Heart left ventricle (tissue), 16 donors: ENCODE measurements at regions of chr10 and their contacts with region 1.

Region 1: GRCh38 chr10:79445141-79445976 is at the start of gene ZCCHC24:
- DNase-seq: peak; percentile 98 to 99 (median 99)
- ATAC-seq: peak; percentile 94 to 96 (median 96)
- H3K4me3 ChIP-seq: peak within 1 kb of the TSS; percentile 86 to 99 (median 91)
- H3K27ac ChIP-seq: peak within 1 kb of the TSS; percentile 84 to 98 (median 96)
- H3K4me1 ChIP-seq: peaks cover 5 to 52% (median 35%) of the 10 kb centered on the region in 12 donors
- H3K27me3 ChIP-seq: no peaks in the 10 kb centered on the region
- CTCF ChIP-seq: no peak
- POLR2A ChIP-seq: peak; percentile 81 to 82
- total RNA-seq, gene ZCCHC24: 44.8 to 122 (median 51.9) TPM

Region 2: GRCh38 chr10:79374312-79375191 is 70.8 kb before region 1 on chr10:
- intact Hi-C with region 1: loop called in 1 of 10 experiments (anchors 5 kb)
- DNase-seq: peak; percentile 78 to 89 (median 83)
- ATAC-seq: peak; percentile 27 to 68 (median 58)
- H3K4me3 ChIP-seq: no peak overlapping the region
- H3K27ac ChIP-seq: no peak overlapping the region
- H3K4me1 ChIP-seq: peaks cover 0 to 17% (median 11%) of the 10 kb centered on the region in 12 donors
- H3K27me3 ChIP-seq: no peaks in the 10 kb centered on the region
- CTCF ChIP-seq: peak in 11 of 12 donors; percentile 90 to 99 (median 98)
- POLR2A ChIP-seq: peak in 1 of 2 donors; percentile 21

Region 3: DNA sequence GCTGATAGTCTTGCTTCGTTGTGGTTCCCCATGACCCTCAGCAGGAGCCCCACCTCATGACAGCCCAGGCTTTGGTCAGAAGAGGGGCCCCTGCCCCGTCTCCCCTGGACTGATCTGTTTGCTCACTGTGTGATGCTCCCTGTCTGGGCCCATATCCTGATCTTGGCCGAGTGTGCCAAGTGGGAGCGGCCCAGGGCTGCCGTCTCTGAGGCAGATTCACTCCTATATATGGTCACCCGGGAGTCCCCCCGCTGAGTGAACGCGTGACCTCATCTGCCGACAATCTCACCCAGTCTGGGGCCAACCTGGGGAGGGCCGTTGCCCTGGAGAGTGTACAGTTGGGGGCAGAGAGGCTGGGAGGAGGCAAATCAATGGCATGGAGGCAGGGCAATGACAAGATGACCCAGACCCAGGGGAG is 63.5 kb before region 1 on chr10:
- intact Hi-C with region 1: loop called in 4 of 10 experiments (anchors 2 to 10 kb)
- DNase-seq: peak; percentile 73 to 89 (median 80)
- ATAC-seq: peak; percentile 68 to 85 (median 75)
- H3K4me3 ChIP-seq: no peak overlapping the region
- H3K27ac ChIP-seq: peak overlapping the region in 10 of 12 donors; percentile 51 to 84 (median 68)
- H3K4me1 ChIP-seq: peaks cover 11 to 43% (median 39%) of the 10 kb centered on the region in 12 donors
- H3K27me3 ChIP-seq: no peaks in the 10 kb centered on the region
- CTCF ChIP-seq: no peak
- POLR2A ChIP-seq: no peak

Region 4: GRCh38 chr10:79400146-79401004 is 45.0 kb before region 1 on chr10:
- intact Hi-C with region 1: loop called in 9 of 10 experiments (anchors 2 to 5 kb)
- DNase-seq: peak in 2 of 5 donors; percentile 52 to 77
- ATAC-seq: no peak
- H3K4me3 ChIP-seq: no peak overlapping the region
- H3K27ac ChIP-seq: peak overlapping the region in 10 of 12 donors; percentile 83 to 98 (median 91)
- H3K4me1 ChIP-seq: peaks cover 0 to 95% (median 76%) of the 10 kb centered on the region in 12 donors
- H3K27me3 ChIP-seq: no peaks in the 10 kb centered on the region
- CTCF ChIP-seq: peak; percentile 46 to 74 (median 62)
- POLR2A ChIP-seq: no peak

Region 5: GRCh38 chr10:79407811-79408795 is 37.3 kb before region 1 on chr10:
- intact Hi-C with region 1: loop called in 9 of 10 experiments (anchors 2 to 5 kb)
- DNase-seq: peak in 4 of 5 donors; percentile 58 to 75 (median 70)
- ATAC-seq: peak in 3 of 4 donors; percentile 16 to 51 (median 44)
- H3K4me3 ChIP-seq: no peak overlapping the region
- H3K27ac ChIP-seq: peak overlapping the region in 9 of 12 donors; percentile 4 to 64 (median 36)
- H3K4me1 ChIP-seq: peaks cover 0 to 80% (median 56%) of the 10 kb centered on the region in 12 donors
- H3K27me3 ChIP-seq: no peaks in the 10 kb centered on the region
- CTCF ChIP-seq: no peak
- POLR2A ChIP-seq: no peak

Region 6: GRCh38 chr10:79463578-79464496 is 18.5 kb after region 1 on chr10:
- intact Hi-C with region 1: loop called in 2 of 10 experiments (anchors 2 kb)
- DNase-seq: peak; percentile 37 to 78 (median 63)
- ATAC-seq: peak; percentile 12 to 61 (median 30)
- H3K4me3 ChIP-seq: no peak overlapping the region
- H3K27ac ChIP-seq: no peak overlapping the region
- H3K4me1 ChIP-seq: peaks cover 0 to 35% (median 15%) of the 10 kb centered on the region in 12 donors
- H3K27me3 ChIP-seq: no peaks in the 10 kb centered on the region
- CTCF ChIP-seq: no peak
- POLR2A ChIP-seq: no peak

Region 7: DNA sequence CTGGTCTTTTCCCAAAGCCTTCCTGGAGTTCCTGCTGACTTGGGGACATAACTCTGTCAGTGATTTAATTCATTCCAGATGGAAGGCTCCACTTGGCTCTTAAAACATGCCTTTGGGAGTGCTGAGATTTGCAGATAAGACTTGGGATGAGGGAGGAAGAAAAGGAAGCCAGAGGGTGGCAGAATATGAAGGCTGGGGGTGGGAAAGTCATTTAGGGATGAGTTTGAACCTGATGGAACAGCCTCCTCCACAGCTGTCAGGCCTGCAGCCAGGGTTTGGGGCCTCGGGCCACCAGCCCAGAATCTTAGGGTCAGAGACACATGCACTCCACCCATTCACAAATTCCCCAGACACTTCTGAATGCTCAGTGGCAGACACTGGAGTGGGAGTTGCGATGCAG is 38.6 kb after region 1 on chr10:
- intact Hi-C with region 1: no loop called
- DNase-seq: peak; percentile 64 to 83 (median 67)
- ATAC-seq: peak; percentile 30 to 72 (median 70)
- H3K4me3 ChIP-seq: no peak overlapping the region
- H3K27ac ChIP-seq: peak overlapping the region in 9 of 12 donors; percentile 30 to 78 (median 56)
- H3K4me1 ChIP-seq: peaks cover 0 to 39% (median 5%) of the 10 kb centered on the region in 12 donors
- H3K27me3 ChIP-seq: no peaks in the 10 kb centered on the region
- CTCF ChIP-seq: no peak
- POLR2A ChIP-seq: no peak